ENCODE measurements at regions of chr12 and their contacts with region 1.

Region 1: DNA sequence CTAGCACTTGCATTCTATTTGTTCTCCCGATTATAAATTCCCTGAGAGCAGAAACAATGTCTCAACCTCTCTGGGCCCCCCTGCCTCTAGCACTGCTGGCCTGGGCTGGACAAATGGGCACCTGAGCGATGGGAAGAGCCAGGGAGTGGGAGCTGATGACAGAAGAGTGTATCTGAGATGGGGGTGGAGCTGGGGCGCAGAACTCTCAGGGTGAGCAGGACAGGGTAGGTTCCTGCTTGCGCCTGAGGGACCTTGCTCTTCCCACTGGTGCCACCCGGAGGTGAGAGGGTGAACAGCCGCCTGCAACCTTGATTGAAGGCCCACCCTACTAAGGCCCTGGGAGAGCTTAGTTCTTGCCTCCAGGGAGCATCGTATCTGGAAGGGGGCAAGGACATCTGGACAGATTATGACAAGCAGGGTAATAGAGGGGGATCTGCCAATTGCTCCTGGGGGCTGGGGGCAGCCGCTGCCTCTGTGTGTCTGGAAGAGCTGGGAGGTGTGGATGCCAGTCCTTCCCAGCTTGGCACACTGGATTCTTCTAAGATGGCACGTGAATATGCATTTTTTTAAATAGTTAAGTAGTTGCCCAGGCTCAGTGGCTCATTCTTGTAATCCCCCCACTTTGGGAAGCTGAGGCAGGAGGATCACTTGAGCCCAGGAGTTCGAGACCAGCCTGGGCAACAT is 43.0 kb upstream of the TSPAN9 start:
- DNase-seq: no peak
- ATAC-seq: peak; percentile 99
- H3K4me3 ChIP-seq: no peak overlapping the region
- H3K27ac ChIP-seq: no peak overlapping the region
- H3K4me1 ChIP-seq: no peaks in the 10 kb centered on the region
- H3K27me3 ChIP-seq: no peaks in the 10 kb centered on the region; a peak in 1 of 4 replicates
- CTCF ChIP-seq: peak; percentile 73 to 83 (median 76)
- EP300 ChIP-seq: no peak
- POLR2A ChIP-seq: no peak
- RAD21 ChIP-seq: peak; percentile 53; the same call in 1 of the 2 replicates

Region 2: DNA sequence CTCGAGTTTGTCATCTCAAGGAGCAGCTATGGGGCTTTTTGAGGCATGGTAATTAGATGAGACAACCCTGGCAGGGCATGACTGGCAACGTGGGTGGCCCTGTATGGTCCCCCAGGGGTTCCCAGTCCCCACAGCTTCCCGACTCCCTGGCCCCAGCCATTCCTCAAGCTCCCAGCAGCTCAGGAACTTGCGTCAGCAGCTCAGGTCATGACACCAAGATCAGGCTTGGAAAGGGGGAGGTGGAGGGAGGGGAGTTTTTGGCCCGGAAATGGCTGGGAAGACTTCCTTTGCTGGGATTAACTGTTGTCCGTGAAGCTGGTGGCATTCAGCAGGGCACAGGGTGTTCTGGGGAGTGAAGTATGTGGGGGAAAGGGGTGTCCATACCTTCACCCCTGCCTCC is 188.9 kb before region 1 on chr12:
- CTCF ChIA-PET with region 1: interaction called, 4 read pairs
- POLR2A ChIA-PET with region 1: no interaction called
- RAD21 ChIA-PET with region 1: no interaction called
- SMC1A ChIA-PET with region 1: no interaction called
- in situ Hi-C with region 1: no loop called
- intact Hi-C with region 1: loop called (anchors 5 kb)
- DNase-seq: no peak
- ATAC-seq: no peak
- H3K4me3 ChIP-seq: no peak overlapping the region
- H3K27ac ChIP-seq: no peak overlapping the region
- H3K4me1 ChIP-seq: no peaks in the 10 kb centered on the region
- H3K27me3 ChIP-seq: no peaks in the 10 kb centered on the region
- CTCF ChIP-seq: no peak
- EP300 ChIP-seq: no peak
- POLR2A ChIP-seq: no peak
- RAD21 ChIP-seq: no peak